T-cell (primary cell): ENCODE measurements at regions of chr5 and their contacts with region 1.

Region 1: DNA sequence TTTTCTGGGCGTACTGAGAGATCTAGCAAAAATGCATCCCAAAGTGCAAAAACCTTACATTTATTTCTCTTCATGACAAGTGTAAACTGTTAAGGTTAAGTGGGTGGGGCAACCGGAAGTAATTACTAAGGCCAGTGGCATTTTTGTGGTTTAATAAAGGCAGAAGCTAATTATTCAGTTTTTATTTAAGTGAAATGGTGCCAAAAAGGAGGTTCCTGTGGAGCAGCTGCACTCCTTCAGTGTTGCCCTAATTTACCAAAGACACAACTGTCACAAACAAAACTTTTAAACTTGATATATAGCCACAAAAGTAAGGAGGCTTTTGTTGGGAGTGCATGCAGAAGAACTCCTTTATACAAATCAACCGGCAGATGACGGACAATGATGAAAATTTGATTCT is 81.6 kb downstream of the NDUFS4 start:
- DNase-seq: no peak
- ATAC-seq: no peak
- H3K4me3 ChIP-seq: no peak overlapping the region
- H3K4me3 Mint-ChIP-seq: no peak overlapping the region
- H3K27ac ChIP-seq: no peak overlapping the region
- H3K27ac Mint-ChIP-seq: no peak overlapping the region
- H3K4me1 ChIP-seq: no peaks in the 10 kb centered on the region
- H3K4me1 Mint-ChIP-seq: peaks cover 2 to 9% (median 5%) of the 10 kb centered on the region in 3 donors
- H3K27me3 ChIP-seq: no peaks in the 10 kb centered on the region
- H3K27me3 Mint-ChIP-seq: no peaks in the 10 kb centered on the region

Region 2: GRCh38 chr5:53486474-53486873 is 155.6 kb before region 1 on chr5:
- CTCF ChIA-PET with region 1: no interaction called
- POLR2A ChIA-PET with region 1: interaction called in 1 of 2 experiments, 13 read pairs
- DNase-seq: no peak
- ATAC-seq: no peak
- H3K4me3 ChIP-seq: no peak overlapping the region
- H3K4me3 Mint-ChIP-seq: no peak overlapping the region
- H3K27ac ChIP-seq: no peak overlapping the region
- H3K27ac Mint-ChIP-seq: no peak overlapping the region
- H3K4me1 ChIP-seq: peaks cover 3 to 12% of the 10 kb centered on the region in 2 experiments
- H3K4me1 Mint-ChIP-seq: peaks cover 17 to 23% (median 22%) of the 10 kb centered on the region in 3 donors
- H3K27me3 ChIP-seq: peaks cover 6 to 23% of the 10 kb centered on the region in 2 experiments
- H3K27me3 Mint-ChIP-seq: peaks cover 30 to 32% of the 10 kb centered on the region in 2 donors

Region 3: DNA sequence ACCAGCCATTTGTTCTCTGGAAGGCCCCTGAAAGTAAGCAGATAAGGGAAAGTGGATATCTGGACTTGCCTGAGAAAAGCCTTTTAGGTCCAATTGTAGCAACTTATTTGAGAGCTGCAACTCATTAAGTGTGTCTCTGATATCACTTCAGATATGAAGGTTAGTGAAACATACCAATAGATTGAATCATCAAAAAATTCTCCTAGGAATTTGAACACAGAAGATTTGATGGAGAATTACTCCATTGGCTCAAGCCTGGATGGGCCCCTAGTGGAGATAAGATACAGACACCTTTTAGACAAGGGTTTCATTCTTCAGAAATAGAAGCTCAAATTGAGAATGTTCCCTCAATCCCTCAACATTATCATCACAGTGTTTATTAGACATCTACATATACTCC is 275.0 kb after region 1 on chr5:
- CTCF ChIA-PET with region 1: no interaction called
- POLR2A ChIA-PET with region 1: no interaction called
- DNase-seq: no peak
- ATAC-seq: no peak
- H3K4me3 ChIP-seq: no peak overlapping the region
- H3K4me3 Mint-ChIP-seq: no peak overlapping the region
- H3K27ac ChIP-seq: no peak overlapping the region
- H3K27ac Mint-ChIP-seq: no peak overlapping the region
- H3K4me1 ChIP-seq: no peaks in the 10 kb centered on the region
- H3K4me1 Mint-ChIP-seq: no peaks in the 10 kb centered on the region
- H3K27me3 ChIP-seq: no peaks in the 10 kb centered on the region
- H3K27me3 Mint-ChIP-seq: no peaks in the 10 kb centered on the region